SK-N-SH (cell line): ENCODE measurements at regions of chr6 and their contacts with region 1.

Region 1: GRCh38 chr6:113920663-113921267 is 50.2 kb downstream of the HDAC2 start:
- DNase-seq: no peak
- H3K4me3 ChIP-seq: no peak overlapping the region
- H3K27ac ChIP-seq: no peak overlapping the region
- H3K4me1 ChIP-seq: peaks cover 0 to 4% of the 10 kb centered on the region in 2 experiments; a peak in 2 of 4 replicates
- H3K27me3 ChIP-seq: no peaks in the 10 kb centered on the region
- CTCF ChIP-seq: no peak
- EP300 ChIP-seq: no peak
- RAD21 ChIP-seq: no peak

Region 2: DNA sequence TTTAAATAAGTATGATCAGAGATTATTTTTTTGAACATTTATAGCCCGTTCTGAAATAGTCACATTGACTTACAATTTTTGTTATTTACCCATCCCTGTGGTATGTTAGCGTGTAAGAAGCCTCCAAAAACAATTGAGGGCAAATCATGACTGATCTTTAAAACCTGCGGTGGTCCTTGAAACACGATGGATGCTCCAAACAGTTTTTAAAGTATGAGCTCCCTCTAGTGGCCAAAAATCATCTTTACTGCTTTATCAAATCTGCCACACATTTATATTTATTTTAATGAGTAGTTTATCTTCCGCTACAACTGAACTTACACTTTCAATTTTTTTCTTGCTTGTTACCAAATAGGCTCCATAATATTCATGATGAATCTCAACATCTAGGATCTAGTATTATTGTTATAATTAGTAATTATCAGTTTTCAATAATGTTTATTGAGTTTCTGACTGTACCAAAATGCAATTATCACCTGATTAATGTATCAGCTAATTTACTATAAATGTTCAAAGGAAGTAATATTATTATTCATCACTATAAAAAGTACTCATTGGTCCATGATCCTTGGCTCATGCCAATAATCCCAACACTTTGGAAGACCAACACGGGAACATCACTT is 11.4 kb before region 1 on chr6:
- CTCF ChIA-PET with region 1: interaction called, 11 read pairs
- POLR2A ChIA-PET with region 1: no interaction called
- DNase-seq: peak; percentile 63
- H3K4me3 ChIP-seq: peak overlapping the region in 1 of 2 experiments; percentile 36; a peak in 1 of 4 replicates
- H3K27ac ChIP-seq: no peak overlapping the region
- H3K4me1 ChIP-seq: peaks cover 0 to 2% of the 10 kb centered on the region in 2 experiments; a peak in 1 of 4 replicates
- H3K27me3 ChIP-seq: no peaks in the 10 kb centered on the region
- CTCF ChIP-seq: peak; percentile 81
- EP300 ChIP-seq: no peak
- RAD21 ChIP-seq: peak; percentile 87

Region 3: GRCh38 chr6:113936093-113936934 is 15.5 kb after region 1 on chr6:
- CTCF ChIA-PET with region 1: interaction called, 13 read pairs
- POLR2A ChIA-PET with region 1: no interaction called
- DNase-seq: peak; percentile 53
- H3K4me3 ChIP-seq: no peak overlapping the region
- H3K27ac ChIP-seq: peak overlapping the region in 1 of 2 experiments; percentile 1; a peak in 1 of 4 replicates
- H3K4me1 ChIP-seq: no peaks in the 10 kb centered on the region; a peak in 1 of 4 replicates
- H3K27me3 ChIP-seq: no peaks in the 10 kb centered on the region
- CTCF ChIP-seq: peak; percentile 87
- EP300 ChIP-seq: no peak
- RAD21 ChIP-seq: peak; percentile 71